IMR-90 (cell line): ENCODE measurements at regions of chr2 and their contacts with region 1.

Region 1: GRCh38 chr2:208013285-208014178 is 11.8 kb downstream of the PLEKHM3 start:
- DNase-seq: peak; percentile 54
- ATAC-seq: peak; percentile 48; the same call in 1 of the 2 replicates
- H3K4me3 ChIP-seq: no peak overlapping the region
- H3K27ac ChIP-seq: no peak overlapping the region
- H3K4me1 ChIP-seq: peaks cover 2% of the 10 kb centered on the region; the same call in 1 of the 2 replicates
- H3K27me3 ChIP-seq: no peaks in the 10 kb centered on the region
- CTCF ChIP-seq: no peak
- POLR2A ChIP-seq: no peak
- RAD21 ChIP-seq: no peak

Region 2: DNA sequence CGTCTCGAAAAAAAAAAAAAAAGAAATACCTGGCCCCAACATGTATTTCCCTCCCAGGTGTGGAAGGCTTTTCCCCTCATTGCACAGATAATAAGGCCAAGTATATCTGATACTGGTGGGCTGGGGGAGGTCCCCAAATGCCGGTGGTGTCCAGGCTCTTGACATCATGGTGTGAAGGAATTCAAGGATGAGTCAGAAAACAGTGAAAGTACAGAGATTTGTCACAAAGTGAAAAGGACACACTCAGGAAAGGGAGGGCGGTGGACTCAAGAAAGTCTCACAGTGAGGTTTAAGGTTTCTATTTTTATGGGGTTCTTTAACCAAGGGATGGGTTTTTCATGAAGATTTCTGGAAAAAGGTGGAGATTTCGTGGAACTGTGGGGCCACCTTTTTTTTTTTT is 206.0 kb before region 1 on chr2:
- CTCF ChIA-PET with region 1: no interaction called
- POLR2A ChIA-PET with region 1: interaction called, 10 read pairs
- dilution Hi-C with region 1: no loop called
- in situ Hi-C with region 1: no loop called
- intact Hi-C with region 1: no loop called
- DNase-seq: no peak
- ATAC-seq: no peak
- H3K4me3 ChIP-seq: no peak overlapping the region
- H3K27ac ChIP-seq: no peak overlapping the region
- H3K4me1 ChIP-seq: no peaks in the 10 kb centered on the region
- H3K27me3 ChIP-seq: no peaks in the 10 kb centered on the region
- CTCF ChIP-seq: no peak
- POLR2A ChIP-seq: no peak
- RAD21 ChIP-seq: no peak

Region 3: GRCh38 chr2:207960090-207960489 is 53.4 kb before region 1 on chr2:
- CTCF ChIA-PET with region 1: no interaction called
- POLR2A ChIA-PET with region 1: no interaction called
- dilution Hi-C with region 1: no loop called
- in situ Hi-C with region 1: no loop called
- intact Hi-C with region 1: no loop called
- DNase-seq: no peak
- ATAC-seq: no peak
- H3K4me3 ChIP-seq: no peak overlapping the region
- H3K27ac ChIP-seq: no peak overlapping the region
- H3K4me1 ChIP-seq: no peaks in the 10 kb centered on the region
- H3K27me3 ChIP-seq: no peaks in the 10 kb centered on the region
- CTCF ChIP-seq: no peak
- POLR2A ChIP-seq: no peak
- RAD21 ChIP-seq: no peak

Region 4: GRCh38 chr2:209102319-209102718 is 1088.8 kb after region 1 on chr2:
- CTCF ChIA-PET with region 1: no interaction called
- POLR2A ChIA-PET with region 1: no interaction called
- dilution Hi-C with region 1: no loop called
- in situ Hi-C with region 1: no loop called
- intact Hi-C with region 1: no loop called
- DNase-seq: no peak
- ATAC-seq: no peak
- H3K4me3 ChIP-seq: no peak overlapping the region
- H3K27ac ChIP-seq: no peak overlapping the region
- H3K4me1 ChIP-seq: no peaks in the 10 kb centered on the region
- H3K27me3 ChIP-seq: no peaks in the 10 kb centered on the region
- CTCF ChIP-seq: no peak
- POLR2A ChIP-seq: no peak
- RAD21 ChIP-seq: no peak